Activated CD8-positive, alpha-beta T cell treated with anti-CD3 and anti-CD28 coated beads for 36 hours (primary cell): ENCODE measurements at regions of chr14 and their contacts with region 1.

Region 1: DNA sequence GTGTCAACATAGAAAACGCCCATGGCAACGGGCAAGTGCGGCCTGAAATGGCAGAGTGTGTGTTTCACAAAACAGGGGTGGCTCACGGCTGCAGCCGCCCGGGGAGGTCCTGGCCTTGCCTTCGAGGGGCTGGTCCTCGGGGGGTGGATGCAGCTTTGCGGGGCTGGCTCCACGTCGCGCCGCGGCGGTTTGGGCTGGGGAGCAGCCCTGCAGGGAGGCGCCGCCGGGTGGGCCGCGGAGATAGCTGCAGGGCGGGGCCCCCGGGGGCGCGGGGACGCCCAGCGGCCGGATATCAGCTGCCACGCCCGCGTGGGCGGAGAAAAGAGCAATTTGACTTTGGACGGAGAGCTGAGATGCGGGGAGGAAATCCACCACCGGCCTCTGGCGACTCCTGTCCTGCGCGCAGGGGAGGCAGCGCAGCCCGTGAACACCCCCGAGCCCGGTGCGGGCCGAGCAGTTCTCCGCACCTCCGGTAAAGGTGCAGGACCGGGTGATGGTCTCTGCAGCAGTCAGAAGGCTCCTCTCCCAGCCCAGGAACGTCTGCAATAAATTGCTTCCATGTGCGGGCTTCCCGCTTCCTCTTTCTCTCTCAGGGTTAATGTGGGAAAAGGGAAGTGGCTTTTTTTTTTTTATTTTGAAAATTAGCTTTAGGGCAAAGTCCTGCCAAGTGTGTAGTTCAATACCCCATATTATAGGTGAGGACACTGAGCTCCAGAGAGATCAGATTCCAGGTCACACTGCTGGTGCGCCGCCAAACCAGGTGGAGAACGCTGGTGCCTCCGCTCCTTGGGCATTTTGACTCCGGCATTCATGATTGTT is 110.5 kb downstream of the ARF6 start:
- DNase-seq: peak; percentile 92
- ATAC-seq: peak; percentile 10
- H3K4me3 Mint-ChIP-seq: peak overlapping the region; percentile 72
- H3K27ac Mint-ChIP-seq: peak overlapping the region; percentile 94
- H3K4me1 Mint-ChIP-seq: peaks cover 35% of the 10 kb centered on the region
- H3K27me3 Mint-ChIP-seq: no peaks in the 10 kb centered on the region
- CTCF ChIP-seq: no peak

Region 2: DNA sequence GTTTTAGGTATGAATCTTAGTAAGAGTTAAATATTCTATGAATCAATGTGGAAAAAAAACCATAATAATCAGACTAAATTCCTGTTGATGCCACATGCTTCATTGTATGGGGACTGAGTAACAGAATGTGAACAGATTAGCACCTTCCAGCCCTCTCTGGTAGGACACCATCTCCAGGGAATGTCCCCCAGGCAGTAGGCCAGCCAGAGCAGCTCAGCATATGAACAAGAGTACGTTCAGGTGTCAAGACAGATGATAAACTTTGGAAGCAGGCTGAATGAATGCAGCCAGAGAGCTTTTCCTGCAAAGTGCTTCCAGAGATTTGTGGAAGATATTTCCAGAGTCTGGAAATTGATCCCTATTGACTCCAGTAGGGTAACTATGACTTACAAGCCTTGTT is 621.6 kb before region 1 on chr14:
- CTCF ChIA-PET with region 1: no interaction called
- POLR2A ChIA-PET with region 1: no interaction called
- intact Hi-C with region 1: no loop called
- DNase-seq: no peak
- ATAC-seq: no peak
- H3K4me3 Mint-ChIP-seq: no peak overlapping the region
- H3K27ac Mint-ChIP-seq: no peak overlapping the region
- H3K4me1 Mint-ChIP-seq: no peaks in the 10 kb centered on the region
- H3K27me3 Mint-ChIP-seq: peaks cover 17% of the 10 kb centered on the region
- CTCF ChIP-seq: no peak

Region 3: GRCh38 chr14:49862089-49862673 is 141.2 kb before region 1 on chr14:
- CTCF ChIA-PET with region 1: interaction called, 58 read pairs
- POLR2A ChIA-PET with region 1: interaction called, 42 read pairs
- intact Hi-C with region 1: loop called (anchors 10 kb)
- DNase-seq: peak; percentile 92
- ATAC-seq: peak; percentile 21
- H3K4me3 Mint-ChIP-seq: no peak overlapping the region
- H3K27ac Mint-ChIP-seq: no peak overlapping the region
- H3K4me1 Mint-ChIP-seq: peaks cover 20% of the 10 kb centered on the region
- H3K27me3 Mint-ChIP-seq: peaks cover 2% of the 10 kb centered on the region
- CTCF ChIP-seq: peak; percentile 100

Region 4: GRCh38 chr14:49897968-49898367 is 105.5 kb before region 1 on chr14:
- CTCF ChIA-PET with region 1: interaction called, 11 read pairs
- POLR2A ChIA-PET with region 1: interaction called, 84 read pairs
- intact Hi-C with region 1: loop called (anchors 1 kb)
- DNase-seq: no peak
- ATAC-seq: no peak
- H3K4me3 Mint-ChIP-seq: peak overlapping the region; percentile 88
- H3K27ac Mint-ChIP-seq: peak overlapping the region; percentile 93
- H3K4me1 Mint-ChIP-seq: peaks cover 22% of the 10 kb centered on the region
- H3K27me3 Mint-ChIP-seq: no peaks in the 10 kb centered on the region
- CTCF ChIP-seq: no peak

Region 5: GRCh38 chr14:49971156-49972130 is 32.0 kb before region 1 on chr14:
- CTCF ChIA-PET with region 1: interaction called, 37 read pairs
- POLR2A ChIA-PET with region 1: interaction called, 135 read pairs
- intact Hi-C with region 1: loop called (anchors 1 kb)
- DNase-seq: peak; percentile 90
- ATAC-seq: peak; percentile 75
- H3K4me3 Mint-ChIP-seq: peak overlapping the region; percentile 69
- H3K27ac Mint-ChIP-seq: peak overlapping the region; percentile 94
- H3K4me1 Mint-ChIP-seq: peaks cover 56% of the 10 kb centered on the region
- H3K27me3 Mint-ChIP-seq: no peaks in the 10 kb centered on the region
- CTCF ChIP-seq: no peak

Region 6: DNA sequence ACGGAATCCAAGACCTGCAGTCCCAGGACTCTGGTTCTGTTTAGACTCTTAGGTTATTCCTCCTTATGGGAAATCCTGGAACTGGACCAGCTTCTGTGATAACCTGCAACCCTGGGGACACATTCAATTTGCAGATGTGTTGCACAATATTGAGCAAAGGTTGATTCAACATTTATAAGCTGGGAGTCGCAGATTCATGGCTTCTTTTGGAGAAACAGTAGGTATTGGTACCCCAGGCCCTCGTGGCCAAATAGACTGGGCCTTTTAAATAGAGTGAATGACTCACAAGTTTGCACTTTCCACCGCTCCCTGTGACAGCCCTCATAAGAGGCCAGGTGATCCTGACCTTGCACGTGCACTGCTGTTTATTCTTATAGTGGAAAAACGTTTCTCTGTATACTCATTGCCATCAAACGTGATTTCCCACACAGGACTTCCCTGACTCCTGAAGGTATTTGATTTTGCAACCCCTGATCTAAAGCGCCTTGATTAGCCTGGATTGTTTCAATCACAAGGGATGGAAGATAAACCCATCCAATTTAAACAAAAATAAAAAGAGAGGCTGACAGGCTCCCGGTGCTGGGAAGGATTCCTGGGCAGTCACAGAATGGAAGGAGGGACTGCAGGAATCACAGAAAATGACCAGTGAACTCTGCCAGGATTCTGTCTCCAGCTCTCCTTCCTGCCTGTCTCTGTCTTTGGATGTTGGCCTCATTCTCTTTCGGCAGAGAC is 14.9 kb after region 1 on chr14:
- CTCF ChIA-PET with region 1: interaction called, 6 read pairs
- POLR2A ChIA-PET with region 1: interaction called, 25 read pairs
- intact Hi-C with region 1: no loop called
- DNase-seq: no peak
- ATAC-seq: no peak
- H3K4me3 Mint-ChIP-seq: no peak overlapping the region
- H3K27ac Mint-ChIP-seq: no peak overlapping the region
- H3K4me1 Mint-ChIP-seq: peaks cover 45% of the 10 kb centered on the region
- H3K27me3 Mint-ChIP-seq: no peaks in the 10 kb centered on the region
- CTCF ChIP-seq: no peak

Region 7: DNA sequence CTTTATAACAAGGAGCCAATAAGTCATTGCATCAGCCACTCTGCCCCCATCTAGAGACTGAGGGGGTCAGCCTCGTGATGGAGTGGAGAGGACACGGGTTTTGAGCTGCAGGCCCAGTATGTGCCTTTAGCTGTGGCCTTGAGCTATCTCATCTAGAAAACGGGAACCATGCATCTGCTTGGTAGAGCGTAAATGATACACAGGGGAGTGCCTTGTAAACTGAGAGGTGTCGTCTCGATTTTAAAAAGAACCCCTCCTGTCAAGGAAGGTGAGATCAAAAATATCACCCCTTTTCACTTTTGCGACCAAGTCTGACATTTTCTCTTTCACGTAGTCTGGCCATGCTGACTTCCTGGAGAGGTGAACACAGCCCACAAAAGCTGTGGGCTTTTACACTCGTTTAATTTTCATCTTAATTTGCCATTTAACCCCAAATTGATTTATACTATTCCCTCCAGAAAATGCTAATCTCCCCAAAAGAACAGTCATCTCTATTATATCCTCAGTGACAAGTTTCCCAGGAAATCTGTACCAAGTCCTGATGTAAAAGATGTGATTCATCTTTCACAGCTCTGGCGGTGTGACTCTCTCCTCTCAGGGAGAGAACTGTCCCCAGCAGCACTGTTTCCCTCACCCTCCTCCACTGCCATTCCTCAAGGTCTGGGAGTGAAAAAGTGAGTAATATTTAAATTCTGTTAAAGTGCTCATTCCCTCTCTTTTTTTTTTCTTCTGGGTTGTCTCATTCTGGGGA is 82.3 kb after region 1 on chr14:
- CTCF ChIA-PET with region 1: interaction called, 5 read pairs
- POLR2A ChIA-PET with region 1: interaction called, 67 read pairs
- intact Hi-C with region 1: loop called (anchors 1 kb)
- DNase-seq: peak; percentile 62
- ATAC-seq: peak; percentile 24
- H3K4me3 Mint-ChIP-seq: peak overlapping the region; percentile 56
- H3K27ac Mint-ChIP-seq: peak overlapping the region; percentile 98
- H3K4me1 Mint-ChIP-seq: peaks cover 94% of the 10 kb centered on the region
- H3K27me3 Mint-ChIP-seq: no peaks in the 10 kb centered on the region
- CTCF ChIP-seq: no peak

Region 8: GRCh38 chr14:50109342-50109741 is 105.9 kb after region 1 on chr14:
- CTCF ChIA-PET with region 1: interaction called, 11 read pairs
- POLR2A ChIA-PET with region 1: interaction called, 10 read pairs
- intact Hi-C with region 1: loop called (anchors 5 kb)
- DNase-seq: no peak
- ATAC-seq: no peak
- H3K4me3 Mint-ChIP-seq: no peak overlapping the region
- H3K27ac Mint-ChIP-seq: no peak overlapping the region
- H3K4me1 Mint-ChIP-seq: peaks cover 37% of the 10 kb centered on the region
- H3K27me3 Mint-ChIP-seq: no peaks in the 10 kb centered on the region
- CTCF ChIP-seq: no peak